PC-3 (cell line): ENCODE measurements at regions of chr6 and their contacts with region 1.

Region 1: GRCh38 chr6:32700391-32701040 is 34.1 kb upstream of the HLA-DQB1 start:
- DNase-seq: peak; percentile 68
- ATAC-seq: peak; percentile 87
- H3K4me3 ChIP-seq: no peak overlapping the region
- H3K27ac ChIP-seq: no peak overlapping the region
- H3K4me1 ChIP-seq: no peaks in the 10 kb centered on the region
- H3K27me3 ChIP-seq: peaks cover 59% of the 10 kb centered on the region
- CTCF ChIP-seq: peak; percentile 91

Region 2: DNA sequence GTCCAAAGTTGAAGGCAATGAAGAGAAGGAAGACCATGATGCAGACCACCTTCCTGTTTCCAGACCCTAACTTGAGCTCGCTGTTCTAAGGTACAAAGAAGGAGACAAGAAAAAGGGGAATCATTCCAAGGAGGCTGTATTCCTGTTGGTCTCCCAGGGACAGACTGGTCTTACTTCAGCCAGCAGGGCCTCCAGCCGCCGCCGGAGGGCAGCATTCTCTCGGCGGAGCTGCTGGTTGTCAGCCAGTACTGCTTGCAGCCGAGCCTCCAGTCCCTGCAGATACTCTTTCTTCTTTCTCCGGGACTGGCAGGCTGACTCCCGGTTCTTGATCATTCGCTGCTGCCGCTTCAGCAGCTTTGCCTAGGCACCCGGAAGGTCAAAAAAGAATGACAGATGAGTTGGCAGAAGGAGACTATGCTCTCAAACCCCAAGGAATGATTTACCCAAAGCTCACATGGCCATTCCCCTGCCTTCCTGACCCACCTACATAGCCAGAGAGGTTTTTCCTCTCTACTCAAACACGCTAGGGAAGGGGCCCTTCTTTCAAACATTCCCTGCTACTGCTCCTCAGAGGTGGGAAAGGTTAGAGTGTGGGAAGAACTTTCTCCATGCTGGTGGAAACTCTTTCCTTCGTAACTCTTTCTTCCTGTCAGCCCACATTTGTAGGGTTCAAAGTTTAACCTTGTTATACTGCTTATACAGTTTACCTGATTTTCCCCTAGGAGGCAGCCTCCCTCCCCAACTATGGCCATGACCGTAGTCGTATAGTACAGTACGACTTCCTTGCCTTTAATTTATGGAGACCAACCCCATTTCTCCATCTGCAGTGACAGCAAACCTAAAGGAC is 581.5 kb before region 1 on chr6:
- CTCF ChIA-PET with region 1: no interaction called
- POLR2A ChIA-PET with region 1: interaction called, 3 read pairs
- intact Hi-C with region 1: loop called (anchors 1 kb)
- DNase-seq: peak; percentile 83
- ATAC-seq: peak; percentile 50
- H3K4me3 ChIP-seq: no peak overlapping the region
- H3K27ac ChIP-seq: no peak overlapping the region
- H3K4me1 ChIP-seq: peaks cover 21% of the 10 kb centered on the region
- H3K27me3 ChIP-seq: no peaks in the 10 kb centered on the region
- CTCF ChIP-seq: peak; percentile 92

Region 3: GRCh38 chr6:32244946-32245398 is 455.5 kb before region 1 on chr6:
- CTCF ChIA-PET with region 1: no interaction called
- POLR2A ChIA-PET with region 1: no interaction called
- intact Hi-C with region 1: loop called (anchors 5 kb)
- DNase-seq: peak; percentile 83
- ATAC-seq: peak; percentile 92
- H3K4me3 ChIP-seq: peak overlapping the region; percentile 17; the same call in 1 of the 2 replicates
- H3K27ac ChIP-seq: no peak overlapping the region
- H3K4me1 ChIP-seq: 0 out of 2 replicates have a peak, but pooled peaks cover 5% of the 10 kb centered on the region
- H3K27me3 ChIP-seq: no peaks in the 10 kb centered on the region
- CTCF ChIP-seq: peak; percentile 94

Region 4: DNA sequence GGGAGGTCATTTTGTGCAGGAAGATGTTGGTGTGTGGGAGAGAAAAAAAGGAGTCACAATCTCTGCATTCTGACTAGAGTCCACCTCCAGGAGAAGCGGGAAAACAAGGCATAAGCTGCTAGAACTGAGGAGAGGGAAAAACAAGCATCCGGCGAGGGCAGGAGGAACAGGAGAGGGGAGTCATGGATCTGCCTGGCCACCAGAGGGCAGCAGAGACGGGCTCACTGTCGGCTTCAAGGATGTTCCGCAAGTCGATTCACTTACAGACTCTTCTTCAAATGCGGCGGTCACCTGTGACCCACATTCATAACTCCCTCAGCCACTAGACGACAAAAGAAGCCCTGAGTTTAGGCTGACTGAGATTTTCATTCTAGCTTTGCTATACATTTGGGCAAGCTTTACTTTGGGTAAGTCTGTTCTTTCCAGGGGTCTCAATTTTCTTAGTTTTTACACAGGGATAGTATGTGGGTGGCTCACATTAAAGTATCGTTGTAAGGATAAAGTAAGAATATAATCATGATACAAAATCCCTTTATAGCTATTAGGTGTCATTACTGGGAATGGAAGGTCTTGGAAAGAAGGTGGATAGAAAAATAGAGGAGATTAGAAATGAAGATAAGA is 287.0 kb before region 1 on chr6:
- CTCF ChIA-PET with region 1: no interaction called
- POLR2A ChIA-PET with region 1: no interaction called
- intact Hi-C with region 1: loop called (anchors 1 kb)
- DNase-seq: peak; percentile 83
- ATAC-seq: peak; percentile 79
- H3K4me3 ChIP-seq: peak overlapping the region; percentile 43; the same call in 1 of the 2 replicates
- H3K27ac ChIP-seq: no peak overlapping the region
- H3K4me1 ChIP-seq: peaks cover 4% of the 10 kb centered on the region; the same call in 1 of the 2 replicates
- H3K27me3 ChIP-seq: peaks cover 9% of the 10 kb centered on the region
- CTCF ChIP-seq: peak; percentile 92

Region 5: DNA sequence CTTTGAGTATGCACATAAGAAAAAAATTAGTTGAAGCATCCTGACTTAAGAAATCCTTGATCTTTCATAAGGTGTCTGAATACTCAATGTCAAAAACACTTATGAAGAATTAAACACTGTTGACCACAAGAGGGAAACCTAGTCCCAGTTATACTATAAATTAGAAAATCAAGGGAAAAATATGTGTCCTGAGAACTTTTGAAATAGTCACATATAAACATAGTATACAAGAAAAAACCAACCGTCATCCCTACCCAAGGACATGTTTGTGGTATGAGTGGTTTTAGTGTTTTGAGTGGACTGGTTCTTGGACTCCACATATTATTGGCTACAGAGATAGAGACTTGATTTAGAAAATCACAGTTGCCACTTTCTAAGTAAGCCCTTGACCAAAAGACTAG is 268.5 kb before region 1 on chr6:
- CTCF ChIA-PET with region 1: no interaction called
- POLR2A ChIA-PET with region 1: no interaction called
- intact Hi-C with region 1: loop called (anchors 1 kb)
- DNase-seq: peak; percentile 51
- ATAC-seq: no peak
- H3K4me3 ChIP-seq: no peak overlapping the region
- H3K27ac ChIP-seq: no peak overlapping the region
- H3K4me1 ChIP-seq: no peaks in the 10 kb centered on the region
- H3K27me3 ChIP-seq: peaks cover 36% of the 10 kb centered on the region
- CTCF ChIP-seq: peak; percentile 63

Region 6: DNA sequence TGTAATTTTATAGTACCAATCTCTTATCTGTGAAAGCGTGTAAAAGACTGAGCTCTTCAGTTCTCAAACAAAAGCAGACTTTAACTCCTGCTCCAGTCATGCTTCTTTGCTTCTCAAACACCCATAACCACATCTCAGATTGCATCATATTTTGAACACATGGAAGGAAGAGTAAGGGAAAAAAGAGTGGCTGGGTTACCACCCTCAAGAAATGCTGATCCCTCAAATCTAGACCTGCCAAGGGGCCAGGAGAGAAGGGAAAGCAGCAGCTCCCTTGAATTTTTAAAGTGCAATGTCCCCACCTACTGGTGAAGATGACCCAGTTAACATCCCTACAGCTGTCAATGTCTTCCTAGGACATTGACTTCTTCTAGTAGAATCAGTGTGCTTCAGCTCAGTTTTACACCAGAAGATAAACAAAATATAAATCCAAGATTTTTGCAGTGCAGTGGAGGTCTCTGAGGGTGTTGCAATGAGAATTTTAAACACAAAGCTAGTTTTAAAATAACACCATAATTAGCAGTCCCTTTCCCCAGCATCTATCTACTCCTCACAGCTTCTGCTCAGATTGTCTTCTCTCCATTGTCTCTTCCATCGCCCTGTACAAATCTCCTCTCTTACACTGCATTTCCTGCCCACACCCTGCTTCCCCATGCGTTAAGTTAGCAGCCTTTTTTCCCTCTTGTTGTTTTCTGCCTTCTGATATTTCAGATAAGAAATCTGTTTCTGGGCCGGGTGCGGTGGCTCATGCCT is 85.4 kb after region 1 on chr6:
- CTCF ChIA-PET with region 1: interaction called, 9 read pairs
- POLR2A ChIA-PET with region 1: no interaction called
- intact Hi-C with region 1: loop called (anchors 5 kb)
- DNase-seq: peak; percentile 75
- ATAC-seq: peak; percentile 97
- H3K4me3 ChIP-seq: no peak overlapping the region
- H3K27ac ChIP-seq: no peak overlapping the region
- H3K4me1 ChIP-seq: no peaks in the 10 kb centered on the region
- H3K27me3 ChIP-seq: peaks cover 20% of the 10 kb centered on the region; the same call in 1 of the 2 replicates
- CTCF ChIP-seq: peak; percentile 67

Region 7: GRCh38 chr6:32838114-32838958 is 137.8 kb after region 1 on chr6 and contains the start of gene TAP2:
- CTCF ChIA-PET with region 1: no interaction called
- POLR2A ChIA-PET with region 1: no interaction called
- intact Hi-C with region 1: no loop called
- DNase-seq: peak; percentile 94
- ATAC-seq: peak; percentile 96
- H3K4me3 ChIP-seq: peak within 1 kb of the TSS; percentile 96
- H3K27ac ChIP-seq: peak within 1 kb of the TSS; percentile 54; the same call in 1 of the 2 replicates
- H3K4me1 ChIP-seq: peaks cover 24% of the 10 kb centered on the region
- H3K27me3 ChIP-seq: no peaks in the 10 kb centered on the region
- CTCF ChIP-seq: peak; percentile 94
- total RNA-seq, gene TAP2: 90.5 and 93.0 TPM in 2 replicates

Region 8: GRCh38 chr6:32868257-32868788 is 167.8 kb after region 1 on chr6:
- CTCF ChIA-PET with region 1: interaction called, 9 read pairs
- POLR2A ChIA-PET with region 1: no interaction called
- intact Hi-C with region 1: loop called (anchors 5 kb)
- DNase-seq: peak; percentile 87
- ATAC-seq: peak; percentile 71
- H3K4me3 ChIP-seq: no peak overlapping the region
- H3K27ac ChIP-seq: no peak overlapping the region
- H3K4me1 ChIP-seq: no peaks in the 10 kb centered on the region
- H3K27me3 ChIP-seq: peaks cover 14% of the 10 kb centered on the region
- CTCF ChIP-seq: peak; percentile 97

Region 9: DNA sequence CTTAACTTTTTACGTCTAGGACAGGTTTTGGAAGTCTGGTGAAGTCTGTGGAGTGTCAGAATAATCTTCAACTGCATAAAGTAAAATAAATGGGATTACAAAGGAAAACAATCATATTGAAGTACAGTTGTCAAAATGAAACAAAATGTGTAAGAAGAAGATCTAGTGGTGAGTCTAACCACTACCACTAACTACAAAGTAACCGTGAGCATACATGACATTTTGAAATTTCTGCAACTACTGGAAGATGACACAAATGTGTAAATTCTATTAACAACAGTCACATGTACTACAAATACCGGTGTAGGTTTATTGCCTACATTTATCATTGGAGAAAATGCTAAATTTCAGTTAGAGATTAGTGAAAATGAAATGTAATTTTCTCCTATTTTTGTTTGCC is 541.5 kb after region 1 on chr6:
- CTCF ChIA-PET with region 1: no interaction called
- POLR2A ChIA-PET with region 1: no interaction called
- intact Hi-C with region 1: no loop called
- DNase-seq: no peak
- ATAC-seq: no peak
- H3K4me3 ChIP-seq: no peak overlapping the region
- H3K27ac ChIP-seq: no peak overlapping the region
- H3K4me1 ChIP-seq: no peaks in the 10 kb centered on the region
- H3K27me3 ChIP-seq: peaks cover 23% of the 10 kb centered on the region; the same call in 1 of the 2 replicates
- CTCF ChIP-seq: no peak